PC-9 (cell line): ENCODE measurements at regions of chr9 and their contacts with region 1.

Region 1: DNA sequence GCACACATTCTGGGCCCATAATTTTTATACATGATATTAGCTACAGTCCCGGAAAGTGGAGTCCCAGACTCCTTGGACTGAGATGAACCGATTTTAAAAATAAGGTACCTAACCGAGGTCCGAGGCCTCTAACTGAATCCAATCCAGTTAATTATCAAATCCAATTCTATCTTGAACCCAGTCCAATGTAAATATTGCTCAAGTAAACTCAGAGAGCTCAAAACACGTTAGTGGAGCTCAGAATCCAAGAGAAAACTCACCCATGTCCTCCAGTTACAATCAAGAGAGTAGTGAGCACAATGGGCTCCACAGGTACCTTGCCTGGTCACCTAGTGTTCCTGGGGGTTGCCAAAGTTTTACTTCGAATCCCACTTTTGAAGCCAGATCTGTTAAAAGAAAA is 37.9 kb upstream of the DIRAS2 start:
- DNase-seq: no peak
- H3K4me3 ChIP-seq: no peak overlapping the region
- H3K27ac ChIP-seq: no peak overlapping the region
- H3K4me1 ChIP-seq: no peaks in the 10 kb centered on the region
- H3K27me3 ChIP-seq: no peaks in the 10 kb centered on the region
- CTCF ChIP-seq: no peak

Region 2: DNA sequence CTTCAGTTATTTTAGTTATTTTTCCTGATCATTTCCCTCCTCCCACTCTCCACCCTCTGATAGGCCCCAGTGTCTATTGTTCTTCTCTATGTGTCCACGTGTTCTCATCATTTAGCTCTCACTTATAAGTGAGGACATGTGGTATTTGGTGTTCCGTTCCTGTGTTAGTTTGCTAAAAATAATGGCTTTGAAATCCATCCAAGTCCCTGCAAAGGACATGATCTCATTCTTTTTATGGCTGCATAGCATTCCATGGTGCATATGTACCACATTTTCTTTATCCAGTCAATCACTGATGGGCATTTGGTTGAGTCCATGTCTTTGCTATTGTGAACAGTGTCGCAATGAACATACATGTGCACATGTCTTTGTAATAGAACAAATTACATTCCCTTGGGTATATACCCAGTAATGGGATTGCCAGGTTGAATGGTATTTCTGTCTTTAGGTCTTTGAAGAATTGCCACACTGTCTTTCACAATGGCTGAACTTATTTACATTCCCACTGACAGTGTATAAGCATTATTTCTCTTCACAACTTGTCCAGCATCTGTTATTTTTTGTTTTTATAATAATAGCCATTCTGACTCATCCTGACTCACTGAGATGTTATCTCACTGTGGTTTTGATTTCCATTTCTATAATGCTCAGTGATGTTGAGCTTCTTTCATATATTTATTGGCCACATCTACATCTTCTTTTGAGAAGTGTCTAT is 20.7 kb before region 1 on chr9:
- CTCF ChIA-PET with region 1: no interaction called
- POLR2A ChIA-PET with region 1: interaction called, 17 read pairs
- intact Hi-C with region 1: no loop called
- DNase-seq: peak in 1 of 2 experiments; percentile 88
- H3K4me3 ChIP-seq: no peak overlapping the region
- H3K27ac ChIP-seq: peak overlapping the region; percentile 27
- H3K4me1 ChIP-seq: peaks cover 16% of the 10 kb centered on the region
- H3K27me3 ChIP-seq: peaks cover 4% of the 10 kb centered on the region; the same call in 1 of the 2 replicates
- CTCF ChIP-seq: no peak